GM12878 (cell line): ENCODE measurements at regions of chr14 and their contacts with region 1.

Region 1: DNA sequence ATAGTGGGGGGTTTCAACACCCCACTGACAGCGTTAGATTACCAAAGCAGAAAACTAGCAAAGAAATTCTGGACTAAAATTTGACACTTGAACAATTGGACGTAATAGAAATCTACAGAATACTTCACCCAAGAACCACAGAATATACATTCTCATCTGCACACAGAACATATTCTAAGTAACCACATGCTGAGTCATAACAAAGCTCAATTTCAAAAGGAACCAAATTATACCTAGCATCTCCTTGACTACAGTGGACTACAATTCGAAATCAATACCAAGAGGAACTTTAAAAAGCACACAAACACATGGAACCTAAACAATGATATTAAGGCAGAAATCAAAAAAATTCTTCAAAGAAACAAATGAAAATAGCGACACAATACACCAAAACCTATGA is 871.6 kb upstream of the MDGA2 start:
- DNase-seq: no peak
- ATAC-seq: peak; percentile 91
- H3K4me3 ChIP-seq: no peak overlapping the region
- H3K27ac ChIP-seq: no peak overlapping the region
- H3K4me1 ChIP-seq: no peaks in the 10 kb centered on the region
- H3K27me3 ChIP-seq: no peaks in the 10 kb centered on the region
- CTCF ChIP-seq: no peak
- EP300 ChIP-seq: peak; percentile 39 to 43; a peak in 2 of 4 replicates
- POLR2A ChIP-seq: no peak
- RAD21 ChIP-seq: no peak

Region 2: DNA sequence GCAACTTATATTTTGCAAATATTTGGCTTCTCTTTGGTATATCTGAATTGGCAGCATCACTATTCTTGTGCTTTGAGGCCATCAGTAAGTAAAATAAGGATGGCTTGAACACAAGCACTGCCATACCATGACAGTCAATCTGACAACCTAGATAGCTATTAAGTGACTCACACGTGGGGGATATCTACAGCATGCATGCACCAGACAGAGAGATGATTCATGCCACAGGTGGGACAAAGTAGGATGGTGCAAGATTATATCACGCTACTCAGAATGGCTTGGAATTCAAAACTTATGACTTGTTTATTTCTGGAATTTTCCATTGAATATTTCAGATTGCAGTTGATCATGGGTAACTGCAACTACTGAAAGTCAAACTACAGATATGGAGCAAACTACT is 196.0 kb before region 1 on chr14:
- CTCF ChIA-PET with region 1: no interaction called
- POLR2A ChIA-PET with region 1: no interaction called
- RAD21 ChIA-PET with region 1: no interaction called
- SMC1A ChIA-PET with region 1: no interaction called
- in situ Hi-C with region 1: no loop called
- intact Hi-C with region 1: no loop called
- DNase-seq: no peak
- ATAC-seq: no peak
- H3K4me3 ChIP-seq: no peak overlapping the region
- H3K27ac ChIP-seq: no peak overlapping the region
- H3K4me1 ChIP-seq: no peaks in the 10 kb centered on the region
- H3K27me3 ChIP-seq: no peaks in the 10 kb centered on the region
- CTCF ChIP-seq: no peak
- EP300 ChIP-seq: no peak
- POLR2A ChIP-seq: no peak
- RAD21 ChIP-seq: no peak

Region 3: GRCh38 chr14:48527831-48528230 is 19.2 kb before region 1 on chr14:
- CTCF ChIA-PET with region 1: no interaction called
- POLR2A ChIA-PET with region 1: no interaction called
- RAD21 ChIA-PET with region 1: no interaction called
- SMC1A ChIA-PET with region 1: no interaction called
- in situ Hi-C with region 1: no loop called
- intact Hi-C with region 1: loop called (anchors 1 kb)
- DNase-seq: no peak
- ATAC-seq: no peak
- H3K4me3 ChIP-seq: no peak overlapping the region
- H3K27ac ChIP-seq: no peak overlapping the region
- H3K4me1 ChIP-seq: no peaks in the 10 kb centered on the region
- H3K27me3 ChIP-seq: no peaks in the 10 kb centered on the region
- CTCF ChIP-seq: no peak
- EP300 ChIP-seq: no peak
- POLR2A ChIP-seq: no peak
- RAD21 ChIP-seq: no peak